CD14-positive monocyte (primary cell): ENCODE measurements at regions of chr11 and their contacts with region 1.

Region 1: GRCh38 chr11:66069715-66070603 is at the start of gene PACS1:
- DNase-seq: peak; percentile 60 to 70 (median 65)
- H3K4me3 ChIP-seq: peak within 1 kb of the TSS; percentile 64 to 96 (median 80)
- H3K4me3 Mint-ChIP-seq: peak within 1 kb of the TSS; percentile 90 to 93
- H3K27ac ChIP-seq: peak within 1 kb of the TSS; percentile 92 to 96
- H3K27ac Mint-ChIP-seq: peak within 1 kb of the TSS; percentile 95 to 98 (median 97)
- H3K4me1 ChIP-seq: peaks cover 45 to 55% of the 10 kb centered on the region in 2 donors
- H3K4me1 Mint-ChIP-seq: peaks cover 57% of the 10 kb centered on the region
- H3K27me3 ChIP-seq: no peaks in the 10 kb centered on the region
- H3K27me3 Mint-ChIP-seq: peaks cover 0 to 5% (median 0%) of the 10 kb centered on the region in 3 donors
- CTCF ChIP-seq: no peak
- polyA plus RNA-seq, gene PACS1: 8.1 to 36.8 (median 12.4) TPM

Region 2: DNA sequence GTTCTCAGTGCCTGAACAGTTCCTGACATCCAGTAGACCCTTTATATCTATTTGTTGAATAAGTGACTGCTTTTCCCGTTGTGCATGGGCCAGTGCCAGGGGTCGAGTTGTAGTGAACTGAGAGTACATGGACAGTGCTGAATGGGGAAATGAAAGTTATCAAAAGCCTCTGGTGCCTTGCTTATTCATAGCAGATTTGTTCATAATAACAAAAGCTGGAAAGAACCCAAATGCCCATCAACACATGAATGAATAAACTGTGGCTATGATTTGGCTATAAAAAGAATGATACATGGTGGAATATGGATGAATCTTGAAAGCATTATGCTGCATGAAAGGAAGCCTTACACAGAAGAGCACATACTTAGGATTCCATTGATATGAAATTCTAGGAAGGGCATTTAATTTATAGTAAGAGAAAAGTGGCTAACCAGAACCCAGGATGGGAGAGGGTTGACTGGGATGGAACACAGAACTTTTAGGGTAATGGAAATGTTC is 42.7 kb after region 1 on chr11:
- intact Hi-C with region 1: loop called in 1 of 2 experiments (anchors 5 kb)
- DNase-seq: peak; percentile 55 to 77 (median 77)
- H3K4me3 ChIP-seq: peak overlapping the region in 1 of 3 experiments; percentile 65
- H3K4me3 Mint-ChIP-seq: peak overlapping the region in 1 of 2 donors; percentile 78
- H3K27ac ChIP-seq: peak overlapping the region; percentile 61 to 86
- H3K27ac Mint-ChIP-seq: peak overlapping the region; percentile 85 to 95 (median 90)
- H3K4me1 ChIP-seq: peaks cover 52 to 67% of the 10 kb centered on the region in 2 donors
- H3K4me1 Mint-ChIP-seq: peaks cover 72% of the 10 kb centered on the region
- H3K27me3 ChIP-seq: no peaks in the 10 kb centered on the region
- H3K27me3 Mint-ChIP-seq: peaks cover 0 to 6% (median 3%) of the 10 kb centered on the region in 3 donors
- CTCF ChIP-seq: no peak

Region 3: DNA sequence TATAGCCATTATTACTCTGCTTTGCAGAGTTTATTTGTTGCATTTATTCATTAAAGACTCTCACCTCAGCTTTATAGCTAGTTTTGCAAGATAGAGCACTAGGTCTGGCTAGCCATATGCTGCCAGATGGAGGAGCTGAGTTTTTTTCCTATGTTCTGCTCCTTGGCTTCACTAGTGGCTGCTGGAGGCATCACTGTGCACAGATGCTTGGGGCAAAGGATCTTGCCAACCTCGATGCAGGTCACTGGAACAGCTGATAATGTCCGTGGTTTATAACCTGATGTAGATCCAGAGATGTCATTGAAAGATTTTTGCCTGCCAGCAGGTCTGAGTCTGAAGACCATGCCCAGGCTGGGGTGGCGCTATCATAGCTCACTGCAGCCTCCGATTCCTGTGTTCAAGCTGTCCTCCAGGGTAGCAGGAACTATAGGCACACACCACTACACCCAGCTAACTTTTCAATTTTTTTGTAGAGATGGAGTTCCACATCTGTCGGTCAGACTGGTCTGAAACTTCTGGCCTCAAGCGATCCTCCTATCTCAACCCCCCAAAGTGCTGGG is 63.3 kb after region 1 on chr11:
- intact Hi-C with region 1: loop called (anchors 5 kb)
- DNase-seq: no peak
- H3K4me3 ChIP-seq: no peak overlapping the region
- H3K4me3 Mint-ChIP-seq: no peak overlapping the region
- H3K27ac ChIP-seq: no peak overlapping the region
- H3K27ac Mint-ChIP-seq: no peak overlapping the region
- H3K4me1 ChIP-seq: no peaks in the 10 kb centered on the region
- H3K4me1 Mint-ChIP-seq: peaks cover 17% of the 10 kb centered on the region
- H3K27me3 ChIP-seq: no peaks in the 10 kb centered on the region
- H3K27me3 Mint-ChIP-seq: peaks cover 0 to 2% (median 2%) of the 10 kb centered on the region in 3 donors
- CTCF ChIP-seq: no peak